GM12878 (cell line): ENCODE measurements at regions of chr17 and their contacts with region 1.

Region 1: GRCh38 chr17:12406623-12407215 is 259.0 kb upstream of the MYOCD start:
- DNase-seq: no peak
- ATAC-seq: no peak
- H3K4me3 ChIP-seq: no peak overlapping the region
- H3K27ac ChIP-seq: no peak overlapping the region
- H3K4me1 ChIP-seq: no peaks in the 10 kb centered on the region
- H3K27me3 ChIP-seq: no peaks in the 10 kb centered on the region; a peak in 1 of 4 replicates
- CTCF ChIP-seq: no peak
- EP300 ChIP-seq: no peak
- POLR2A ChIP-seq: no peak
- RAD21 ChIP-seq: no peak

Region 2: DNA sequence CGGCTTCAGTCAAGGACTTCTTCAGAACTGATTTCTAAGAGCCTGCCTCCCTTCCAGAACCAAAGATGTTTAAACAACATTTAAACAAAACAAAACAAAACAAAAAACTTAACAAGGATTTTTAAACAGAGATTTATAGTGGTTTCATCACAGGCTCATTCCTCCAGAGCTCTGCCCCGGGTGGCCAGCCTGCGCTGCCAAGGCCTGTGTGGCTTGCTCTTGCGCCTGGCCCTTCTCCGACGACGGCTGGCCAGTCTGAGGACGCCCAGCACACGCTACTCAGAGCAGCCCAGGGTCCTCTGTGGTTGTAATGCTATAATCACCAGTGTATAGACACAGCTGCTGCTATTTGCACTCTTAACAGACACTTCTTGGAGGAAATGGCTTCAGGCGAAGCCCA is 48.2 kb before region 1 on chr17:
- CTCF ChIA-PET with region 1: no interaction called
- POLR2A ChIA-PET with region 1: no interaction called
- RAD21 ChIA-PET with region 1: no interaction called
- SMC1A ChIA-PET with region 1: no interaction called
- in situ Hi-C with region 1: loop called (anchors 5 kb)
- intact Hi-C with region 1: no loop called
- DNase-seq: no peak
- ATAC-seq: no peak
- H3K4me3 ChIP-seq: no peak overlapping the region
- H3K27ac ChIP-seq: no peak overlapping the region
- H3K4me1 ChIP-seq: no peaks in the 10 kb centered on the region
- H3K27me3 ChIP-seq: no peaks in the 10 kb centered on the region
- CTCF ChIP-seq: no peak
- EP300 ChIP-seq: no peak
- POLR2A ChIP-seq: no peak
- RAD21 ChIP-seq: no peak

Region 3: DNA sequence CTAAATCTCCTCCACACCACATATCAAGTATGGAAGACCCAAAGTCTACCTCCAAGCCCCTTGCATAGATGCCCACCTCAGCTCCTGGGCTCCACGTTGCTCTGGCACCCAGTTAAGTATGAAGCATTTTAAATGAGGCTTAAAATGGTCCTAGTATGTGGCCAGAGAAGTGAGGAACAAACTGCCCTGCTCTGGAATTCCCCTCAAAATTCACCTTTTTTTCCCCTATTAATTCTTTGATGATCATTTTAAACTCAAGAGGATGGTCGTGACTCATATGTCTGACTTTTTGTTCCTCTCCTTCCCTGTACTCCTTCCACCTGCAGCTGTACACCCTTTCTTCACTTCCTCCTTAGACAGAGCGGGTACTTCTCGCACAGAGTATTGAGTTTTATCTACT is 24.5 kb after region 1 on chr17:
- CTCF ChIA-PET with region 1: no interaction called
- POLR2A ChIA-PET with region 1: no interaction called
- RAD21 ChIA-PET with region 1: no interaction called
- SMC1A ChIA-PET with region 1: interaction called, 10 read pairs
- in situ Hi-C with region 1: no loop called
- intact Hi-C with region 1: no loop called
- DNase-seq: peak; percentile 85
- ATAC-seq: peak; percentile 89
- H3K4me3 ChIP-seq: 0 out of 2 replicates have a peak overlapping the region, but pooled peaks have one; percentile 6
- H3K27ac ChIP-seq: peak overlapping the region; percentile 98
- H3K4me1 ChIP-seq: peaks cover 44% of the 10 kb centered on the region
- H3K27me3 ChIP-seq: no peaks in the 10 kb centered on the region
- CTCF ChIP-seq: no peak
- EP300 ChIP-seq: peak; percentile 54 to 96; a peak in 3 of 4 replicates
- POLR2A ChIP-seq: peak; percentile 52
- RAD21 ChIP-seq: no peak